CD4-positive, alpha-beta memory T cell (primary cell): ENCODE measurements at regions of chr16 and their contacts with region 1.

Region 1: DNA sequence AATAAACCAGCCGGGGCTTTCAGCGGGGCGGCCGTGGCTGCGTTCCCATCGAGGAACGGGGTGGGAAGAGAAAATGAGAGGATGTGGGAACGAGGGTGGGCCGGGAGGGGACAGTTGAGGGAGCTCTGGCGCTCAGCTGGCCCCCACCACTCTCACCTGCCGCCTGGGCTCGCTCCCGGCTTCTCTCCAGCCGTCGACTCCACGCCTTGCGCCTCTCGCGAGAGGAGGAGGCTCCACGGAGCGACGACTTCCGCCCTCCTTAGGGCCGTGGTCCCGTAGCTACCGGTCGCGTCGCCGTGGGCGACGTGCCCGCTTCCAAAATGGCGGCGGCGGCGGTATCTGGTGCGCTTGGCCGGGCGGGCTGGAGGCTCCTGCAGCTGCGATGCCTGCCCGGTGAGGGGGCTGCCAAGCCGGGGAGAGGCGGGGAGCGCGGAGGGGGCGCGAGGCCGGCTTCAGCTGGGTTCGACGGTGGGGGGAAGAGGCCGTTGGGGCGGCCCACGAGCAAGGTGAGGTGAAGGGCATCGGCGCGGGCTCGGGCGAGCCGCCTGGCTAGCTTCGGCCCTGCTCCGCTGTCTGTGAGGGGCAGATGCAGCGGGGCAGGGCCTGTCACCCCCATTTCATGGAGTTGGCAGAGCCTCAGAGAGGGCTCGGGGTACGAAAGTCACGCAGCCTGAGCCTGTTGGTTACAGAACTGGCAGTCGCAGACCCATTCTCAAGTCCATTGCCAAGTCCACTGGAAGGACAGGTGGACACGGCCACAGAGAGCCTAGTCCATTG is at the starts of genes CIAPIN1 and COQ9:
- DNase-seq: peak; percentile 88 to 94 (median 91)
- H3K4me3 ChIP-seq: peak within 1 kb of the TSS; percentile 66 to 78
- H3K4me3 Mint-ChIP-seq: peak within 1 kb of the TSS; percentile 90 to 94 (median 92)
- H3K27ac ChIP-seq: peak within 1 kb of the TSS; percentile 86
- H3K27ac Mint-ChIP-seq: peak within 1 kb of the TSS; percentile 79 to 94 (median 91)
- H3K4me1 ChIP-seq: peaks cover 23% of the 10 kb centered on the region
- H3K4me1 Mint-ChIP-seq: peaks cover 15 to 38% (median 26%) of the 10 kb centered on the region in 4 donors
- H3K27me3 ChIP-seq: no peaks in the 10 kb centered on the region
- H3K27me3 Mint-ChIP-seq: no peaks in the 10 kb centered on the region
- total RNA-seq, gene CIAPIN1: 28.1 to 28.5 TPM
- total RNA-seq, gene COQ9: 35.3 to 37.7 TPM

Region 2: GRCh38 chr16:57185944-57186871 is 261.2 kb before region 1 on chr16 and contains the starts of genes PSME3IP1 and RSPRY1:
- CTCF ChIA-PET with region 1: no interaction called
- POLR2A ChIA-PET with region 1: interaction called, 5 read pairs
- intact Hi-C with region 1: loop called (anchors 10 kb)
- DNase-seq: peak; percentile 99 to 100 (median 100)
- H3K4me3 ChIP-seq: peak within 1 kb of the TSS; percentile 88
- H3K4me3 Mint-ChIP-seq: peak within 1 kb of the TSS; percentile 97 to 99 (median 99)
- H3K27ac ChIP-seq: peak within 1 kb of the TSS; percentile 87
- H3K27ac Mint-ChIP-seq: peak within 1 kb of the TSS; percentile 95 to 99 (median 97)
- H3K4me1 ChIP-seq: peaks cover 45% of the 10 kb centered on the region
- H3K4me1 Mint-ChIP-seq: peaks cover 36 to 60% (median 48%) of the 10 kb centered on the region in 4 donors
- H3K27me3 ChIP-seq: no peaks in the 10 kb centered on the region
- H3K27me3 Mint-ChIP-seq: no peaks in the 10 kb centered on the region
- total RNA-seq, gene PSME3IP1: 147 to 157 TPM
- total RNA-seq, gene RSPRY1: 32.8 to 38.0 TPM

Region 3: DNA sequence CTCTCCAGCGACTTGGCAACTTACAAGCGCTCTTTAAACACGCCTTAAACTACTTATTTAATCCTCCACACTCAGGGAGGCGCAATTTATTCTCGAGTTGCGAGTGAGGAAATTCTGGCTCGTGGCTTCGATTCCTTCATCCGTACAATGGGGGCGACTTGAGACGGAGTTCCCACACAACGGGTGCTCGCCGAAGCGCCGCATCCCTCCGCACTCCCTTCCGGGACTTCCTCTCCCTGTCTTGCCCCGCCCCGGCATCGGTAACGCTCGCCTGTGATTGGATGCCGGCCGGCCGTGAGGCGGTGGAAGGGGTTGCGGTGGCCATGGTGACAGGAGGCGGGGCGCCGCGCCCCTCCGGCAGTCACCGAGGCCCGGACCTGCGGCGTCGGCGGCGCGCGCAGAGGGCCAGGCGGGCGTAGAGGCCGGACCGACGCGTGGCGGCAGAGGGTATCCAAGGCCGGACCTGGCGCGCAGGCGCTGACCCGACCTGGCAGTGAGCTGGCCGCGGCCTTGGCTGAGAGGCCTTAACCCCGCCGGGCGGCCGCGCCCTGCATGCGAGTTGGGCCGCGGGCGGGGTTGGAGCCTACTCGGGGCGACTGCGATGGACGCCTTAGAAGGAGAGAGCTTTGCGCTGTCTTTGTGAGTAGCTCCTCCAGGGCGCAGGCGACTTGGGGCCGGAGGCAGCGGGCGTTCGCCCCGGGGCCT is 202.5 kb before region 1 on chr16 and contains the start of gene ARL2BP:
- CTCF ChIA-PET with region 1: no interaction called
- POLR2A ChIA-PET with region 1: interaction called, 3 read pairs
- intact Hi-C with region 1: loop called (anchors 1 kb)
- DNase-seq: peak; percentile 94 to 98 (median 95)
- H3K4me3 ChIP-seq: peak within 1 kb of the TSS; percentile 49 to 60
- H3K4me3 Mint-ChIP-seq: peak within 1 kb of the TSS; percentile 91 to 98 (median 95)
- H3K27ac ChIP-seq: peak within 1 kb of the TSS; percentile 78
- H3K27ac Mint-ChIP-seq: peak within 1 kb of the TSS; percentile 93 to 99 (median 98)
- H3K4me1 ChIP-seq: peaks cover 17% of the 10 kb centered on the region
- H3K4me1 Mint-ChIP-seq: peaks cover 13 to 21% (median 18%) of the 10 kb centered on the region in 4 donors
- H3K27me3 ChIP-seq: no peaks in the 10 kb centered on the region
- H3K27me3 Mint-ChIP-seq: no peaks in the 10 kb centered on the region
- total RNA-seq, gene ARL2BP: 48.0 to 49.1 TPM

Region 4: GRCh38 chr16:57413301-57413730 is 34.1 kb before region 1 on chr16:
- CTCF ChIA-PET with region 1: interaction called, 20 read pairs
- POLR2A ChIA-PET with region 1: interaction called, 5 read pairs
- intact Hi-C with region 1: no loop called
- DNase-seq: no peak
- H3K4me3 ChIP-seq: no peak overlapping the region
- H3K4me3 Mint-ChIP-seq: no peak overlapping the region
- H3K27ac ChIP-seq: no peak overlapping the region
- H3K27ac Mint-ChIP-seq: no peak overlapping the region
- H3K4me1 ChIP-seq: peaks cover 7% of the 10 kb centered on the region
- H3K4me1 Mint-ChIP-seq: peaks cover 6 to 13% (median 7%) of the 10 kb centered on the region in 4 donors
- H3K27me3 ChIP-seq: no peaks in the 10 kb centered on the region
- H3K27me3 Mint-ChIP-seq: peaks cover 1 to 6% of the 10 kb centered on the region in 2 donors

Region 5: DNA sequence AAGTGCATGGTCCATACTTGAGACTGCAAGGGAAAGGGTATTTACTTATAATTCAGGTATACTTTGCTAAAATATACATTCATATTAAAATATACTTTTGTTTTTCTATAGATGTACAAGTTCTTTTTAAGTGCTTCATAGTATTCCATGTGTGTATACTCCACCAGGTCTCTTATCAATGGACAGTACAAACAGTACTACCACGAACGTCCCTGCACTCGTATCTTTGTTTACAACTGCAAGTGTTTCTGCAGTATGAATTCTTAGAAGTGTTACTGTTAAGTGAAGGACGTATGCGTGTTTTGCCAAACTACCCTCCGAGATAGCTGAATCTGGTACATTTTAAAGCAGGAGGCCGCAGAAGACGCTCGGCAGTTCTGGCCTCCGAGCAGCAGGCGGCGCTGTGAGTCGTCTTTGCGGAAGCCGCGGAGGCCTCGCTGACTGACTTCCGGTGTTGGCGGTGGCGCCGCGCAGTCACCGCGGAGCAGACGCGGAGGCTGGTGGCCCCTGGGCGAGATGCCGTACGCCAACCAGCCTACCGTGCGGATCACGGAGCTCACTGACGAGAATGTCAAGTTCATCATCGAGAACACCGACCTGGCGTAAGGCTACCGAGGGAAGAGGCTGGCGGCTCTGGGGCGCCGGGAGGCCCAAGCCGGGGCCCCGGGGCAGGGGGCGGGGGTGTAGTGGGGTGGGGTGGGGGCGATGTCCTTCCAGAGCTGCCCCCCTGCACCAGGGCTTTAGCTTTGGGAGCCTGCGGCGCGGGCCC is 15.0 kb after region 1 on chr16 and contains the start of gene POLR2C:
- CTCF ChIA-PET with region 1: interaction called, 15 read pairs
- POLR2A ChIA-PET with region 1: interaction called, 112 read pairs
- intact Hi-C with region 1: loop called (anchors 1 kb)
- DNase-seq: peak; percentile 89 to 93 (median 90)
- H3K4me3 ChIP-seq: peak within 1 kb of the TSS; percentile 81 to 87
- H3K4me3 Mint-ChIP-seq: peak within 1 kb of the TSS; percentile 98 to 100 (median 100)
- H3K27ac ChIP-seq: peak within 1 kb of the TSS; percentile 69
- H3K27ac Mint-ChIP-seq: peak within 1 kb of the TSS; percentile 96 to 100 (median 99)
- H3K4me1 ChIP-seq: peaks cover 36% of the 10 kb centered on the region
- H3K4me1 Mint-ChIP-seq: peaks cover 16 to 43% (median 34%) of the 10 kb centered on the region in 4 donors
- H3K27me3 ChIP-seq: no peaks in the 10 kb centered on the region
- H3K27me3 Mint-ChIP-seq: no peaks in the 10 kb centered on the region
- total RNA-seq, gene POLR2C: 71.4 to 78.1 TPM

Region 6: DNA sequence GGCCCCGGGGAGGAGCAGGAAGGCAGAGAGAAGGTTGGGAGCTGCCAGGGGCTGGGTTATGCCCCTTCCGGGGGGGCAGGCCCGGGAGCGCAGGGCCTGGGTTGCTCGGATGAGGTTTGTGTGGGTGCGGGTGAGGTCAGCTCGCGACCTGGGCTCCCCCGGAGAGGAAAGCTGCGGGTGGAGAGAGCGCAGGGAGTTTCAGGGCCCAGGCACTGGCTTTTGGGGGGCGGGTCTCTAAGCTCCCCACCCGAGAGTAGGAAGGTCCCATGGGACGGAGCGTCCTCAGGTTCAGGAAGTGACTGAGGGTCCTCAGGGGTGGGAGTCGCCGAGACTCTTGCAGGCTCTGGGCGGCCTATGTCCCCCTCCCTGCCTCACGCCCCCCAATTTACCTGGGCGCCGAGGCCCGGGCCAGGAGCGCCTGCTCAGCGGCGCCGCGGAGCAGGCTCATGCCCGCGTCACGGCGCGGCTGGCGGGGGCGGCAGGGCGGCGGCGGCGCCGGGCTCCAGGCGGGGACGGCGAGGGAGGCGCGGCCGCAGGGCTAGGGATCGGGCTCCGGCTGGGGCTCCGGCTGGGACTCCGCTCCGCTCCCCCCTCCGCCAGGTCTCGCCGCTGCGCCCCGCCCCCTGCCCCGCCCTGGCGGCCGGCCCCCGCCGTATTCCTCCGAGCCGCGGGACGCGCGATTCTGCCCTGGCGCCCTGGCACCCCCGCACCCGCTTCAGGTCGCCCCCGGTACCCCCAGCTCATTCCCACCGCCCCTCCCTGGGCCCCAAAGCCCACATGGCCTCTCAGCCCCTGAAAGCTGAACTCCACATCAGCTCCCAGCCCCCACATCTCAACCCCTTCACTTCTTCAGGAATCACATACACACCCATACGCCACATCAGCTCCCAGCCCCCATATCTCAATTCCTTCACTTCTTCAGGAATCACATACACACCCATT is 38.8 kb after region 1 on chr16 and contains the start of gene DOK4:
- CTCF ChIA-PET with region 1: no interaction called
- POLR2A ChIA-PET with region 1: interaction called, 8 read pairs
- intact Hi-C with region 1: loop called (anchors 1 kb)
- DNase-seq: peak; percentile 65 to 72 (median 69)
- H3K4me3 ChIP-seq: peak within 1 kb of the TSS in 1 of 2 donors; percentile 55
- H3K4me3 Mint-ChIP-seq: peak within 1 kb of the TSS; percentile 82 to 90 (median 86)
- H3K27ac ChIP-seq: peak within 1 kb of the TSS; percentile 36
- H3K27ac Mint-ChIP-seq: peak within 1 kb of the TSS in 5 of 7 donors; percentile 44 to 81 (median 77)
- H3K4me1 ChIP-seq: peaks cover 17% of the 10 kb centered on the region
- H3K4me1 Mint-ChIP-seq: peaks cover 11 to 27% (median 21%) of the 10 kb centered on the region in 4 donors
- H3K27me3 ChIP-seq: no peaks in the 10 kb centered on the region
- H3K27me3 Mint-ChIP-seq: no peaks in the 10 kb centered on the region
- total RNA-seq, gene DOK4: 2.8 to 3.0 TPM

Region 7: GRCh38 chr16:57497121-57497520 is 49.7 kb after region 1 on chr16:
- CTCF ChIA-PET with region 1: no interaction called
- POLR2A ChIA-PET with region 1: no interaction called
- intact Hi-C with region 1: no loop called
- DNase-seq: no peak
- H3K4me3 ChIP-seq: no peak overlapping the region
- H3K4me3 Mint-ChIP-seq: no peak overlapping the region
- H3K27ac ChIP-seq: no peak overlapping the region
- H3K27ac Mint-ChIP-seq: no peak overlapping the region
- H3K4me1 ChIP-seq: peaks cover 12% of the 10 kb centered on the region
- H3K4me1 Mint-ChIP-seq: peaks cover 3 to 11% (median 9%) of the 10 kb centered on the region in 4 donors
- H3K27me3 ChIP-seq: no peaks in the 10 kb centered on the region
- H3K27me3 Mint-ChIP-seq: peaks cover 5 to 6% of the 10 kb centered on the region in 2 donors

Region 8: GRCh38 chr16:57535680-57536305 is 88.4 kb after region 1 on chr16:
- CTCF ChIA-PET with region 1: no interaction called
- POLR2A ChIA-PET with region 1: interaction called, 12 read pairs
- intact Hi-C with region 1: no loop called
- DNase-seq: peak; percentile 89 to 95 (median 93)
- H3K4me3 ChIP-seq: peak overlapping the region in 1 of 2 donors; percentile 51
- H3K4me3 Mint-ChIP-seq: peak overlapping the region; percentile 80 to 91 (median 83)
- H3K27ac ChIP-seq: peak overlapping the region; percentile 92
- H3K27ac Mint-ChIP-seq: peak overlapping the region; percentile 96 to 99 (median 98)
- H3K4me1 ChIP-seq: peaks cover 76% of the 10 kb centered on the region
- H3K4me1 Mint-ChIP-seq: peaks cover 60 to 76% (median 69%) of the 10 kb centered on the region in 4 donors
- H3K27me3 ChIP-seq: no peaks in the 10 kb centered on the region
- H3K27me3 Mint-ChIP-seq: no peaks in the 10 kb centered on the region

Region 9: GRCh38 chr16:57871456-57871855 is 424.1 kb after region 1 on chr16:
- CTCF ChIA-PET with region 1: no interaction called
- POLR2A ChIA-PET with region 1: no interaction called
- intact Hi-C with region 1: no loop called
- DNase-seq: no peak
- H3K4me3 ChIP-seq: no peak overlapping the region
- H3K4me3 Mint-ChIP-seq: no peak overlapping the region
- H3K27ac ChIP-seq: no peak overlapping the region
- H3K27ac Mint-ChIP-seq: no peak overlapping the region
- H3K4me1 ChIP-seq: no peaks in the 10 kb centered on the region
- H3K4me1 Mint-ChIP-seq: no peaks in the 10 kb centered on the region
- H3K27me3 ChIP-seq: no peaks in the 10 kb centered on the region
- H3K27me3 Mint-ChIP-seq: peaks cover 5 to 16% of the 10 kb centered on the region in 2 donors

Region 10: DNA sequence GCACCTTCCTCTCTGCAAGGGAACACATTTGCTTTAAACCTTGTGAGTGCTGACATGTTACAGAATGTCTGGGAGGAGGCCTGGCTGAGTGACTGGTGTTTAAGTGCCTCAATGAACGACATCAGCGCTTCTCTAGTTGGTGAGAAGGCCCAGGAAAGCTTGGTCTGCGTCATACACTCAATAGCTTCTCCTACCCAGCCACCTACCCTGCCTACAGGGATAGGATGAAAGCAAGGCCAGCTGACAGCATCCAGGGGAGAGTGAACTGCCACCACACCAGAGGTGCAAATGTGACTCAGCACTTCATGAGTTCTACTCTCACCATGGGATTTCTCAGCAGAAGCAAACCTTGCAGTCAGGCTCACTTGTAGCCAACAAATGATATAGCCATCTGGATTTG is 713.5 kb after region 1 on chr16:
- CTCF ChIA-PET with region 1: no interaction called
- POLR2A ChIA-PET with region 1: no interaction called
- intact Hi-C with region 1: no loop called
- DNase-seq: no peak
- H3K4me3 ChIP-seq: no peak overlapping the region
- H3K4me3 Mint-ChIP-seq: no peak overlapping the region
- H3K27ac ChIP-seq: no peak overlapping the region
- H3K27ac Mint-ChIP-seq: peak overlapping the region in 2 of 7 donors; percentile 10 to 52
- H3K4me1 ChIP-seq: no peaks in the 10 kb centered on the region
- H3K4me1 Mint-ChIP-seq: no peaks in the 10 kb centered on the region
- H3K27me3 ChIP-seq: no peaks in the 10 kb centered on the region
- H3K27me3 Mint-ChIP-seq: no peaks in the 10 kb centered on the region